HAP-1 (cell line): ENCODE measurements at regions of chrX and their contacts with region 1.

Region 1: DNA sequence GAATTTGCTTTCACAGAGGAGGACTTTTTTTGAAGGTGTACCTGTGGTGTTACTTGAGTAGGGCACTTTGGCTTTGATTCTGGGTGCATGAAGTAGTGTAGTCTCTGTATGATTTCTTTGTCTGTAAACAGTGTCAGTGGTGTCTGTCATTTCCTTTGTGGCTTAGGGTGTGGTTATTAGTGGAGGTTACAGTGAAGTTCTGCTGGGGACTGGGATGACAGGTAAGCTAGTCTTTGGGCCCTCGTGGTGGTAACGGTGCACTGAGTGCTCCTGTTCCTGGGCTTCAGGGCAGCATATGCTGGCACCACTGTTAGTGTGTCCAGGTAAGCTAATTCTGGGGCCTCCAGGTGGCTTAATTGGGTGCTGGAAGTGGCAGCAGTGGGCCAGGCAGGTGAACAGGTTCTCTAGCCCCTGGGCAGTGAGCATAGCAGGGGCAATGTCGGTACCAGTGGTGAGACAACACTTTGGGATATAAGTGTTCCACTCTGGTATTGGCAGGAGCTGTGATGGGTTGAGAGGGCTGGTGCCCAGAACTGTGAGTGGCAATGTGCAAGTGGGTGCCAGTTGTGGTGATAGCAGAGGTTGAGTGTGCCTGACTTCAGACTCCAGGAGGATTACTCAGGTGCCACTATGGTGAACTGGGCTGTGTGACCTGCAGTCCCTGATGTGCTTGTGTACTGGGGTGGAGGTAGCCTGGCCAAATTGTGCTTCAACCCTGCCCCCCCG is 26.0 kb upstream of the VSIG1 start:
- DNase-seq: no peak
- H3K4me3 ChIP-seq: no peak overlapping the region
- H3K4me1 ChIP-seq: no peaks in the 10 kb centered on the region; the same call in 1 of the 2 replicates
- H3K27me3 ChIP-seq: peaks cover 2% of the 10 kb centered on the region

Region 2: DNA sequence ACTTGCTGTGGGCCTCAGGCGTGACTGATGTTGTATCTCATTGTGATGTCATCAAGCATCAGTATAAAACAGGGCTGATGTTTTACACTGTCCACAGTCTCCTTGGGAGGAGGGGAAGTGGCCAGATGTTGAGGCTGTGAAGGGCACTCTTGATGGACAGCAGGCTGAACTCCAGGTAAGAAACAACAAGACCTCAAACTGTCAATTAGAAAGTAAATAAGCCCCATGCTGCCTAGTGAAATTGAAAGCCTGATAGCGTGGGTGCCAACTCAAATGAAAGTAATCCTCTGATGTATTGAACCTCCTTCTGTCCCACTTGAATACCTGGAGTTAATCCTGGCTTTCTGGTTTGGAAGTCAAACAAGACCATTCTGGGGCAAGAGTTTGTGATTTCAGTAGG is 45.8 kb after region 1 on chrX:
- in situ Hi-C with region 1: loop called (anchors 5 kb)
- DNase-seq: no peak
- H3K4me3 ChIP-seq: no peak overlapping the region
- H3K4me1 ChIP-seq: no peaks in the 10 kb centered on the region
- H3K27me3 ChIP-seq: peaks cover 18% of the 10 kb centered on the region

Region 3: GRCh38 chrX:108122748-108123147 is 103.9 kb after region 1 on chrX:
- in situ Hi-C with region 1: no loop called
- DNase-seq: peak; percentile 68 to 82
- H3K4me3 ChIP-seq: no peak overlapping the region
- H3K4me1 ChIP-seq: peaks cover 15% of the 10 kb centered on the region
- H3K27me3 ChIP-seq: no peaks in the 10 kb centered on the region